Left colon (tissue), 2 donors: ENCODE measurements at regions of chr10 and their contacts with region 1.

Region 1: DNA sequence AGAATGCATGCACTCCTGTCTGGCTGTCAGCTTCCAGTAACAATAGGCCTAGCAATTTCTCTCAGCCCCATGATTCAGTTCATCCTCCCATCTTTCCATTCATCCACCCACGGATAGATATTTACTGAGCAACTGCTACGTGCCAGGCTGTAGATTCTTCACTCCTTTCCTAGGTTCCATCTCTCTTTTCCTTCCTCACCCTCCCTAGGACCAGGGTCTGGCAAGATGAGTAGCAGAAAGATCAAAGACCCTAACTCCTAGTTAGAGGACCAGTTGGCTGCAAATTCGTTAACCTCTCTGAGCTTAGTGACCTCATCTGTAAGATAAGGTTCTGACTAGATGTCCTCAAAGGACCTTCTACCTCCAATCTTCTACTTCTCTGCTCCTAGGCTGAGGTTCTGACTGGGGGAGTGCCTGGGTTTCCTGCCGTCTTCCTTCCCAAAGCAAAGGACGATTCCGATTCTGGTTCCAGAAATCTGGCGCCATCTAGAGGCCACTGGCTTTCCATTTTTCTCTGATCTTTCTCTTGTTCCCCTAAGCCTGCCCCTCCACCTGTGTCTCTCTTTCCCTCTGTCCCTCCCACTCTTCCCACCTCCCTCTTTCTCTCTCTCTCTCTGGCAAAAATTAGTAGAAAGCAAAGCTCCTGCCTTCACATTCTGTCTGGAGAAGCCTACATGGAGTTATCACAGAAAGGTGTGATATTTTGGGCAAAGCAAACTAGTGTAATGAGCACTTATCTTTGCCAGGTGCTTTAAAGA is 26.2 kb downstream of the TBATA start:
- DNase-seq: peak; percentile 46 to 76
- ATAC-seq: peak; percentile 65

Region 2: DNA sequence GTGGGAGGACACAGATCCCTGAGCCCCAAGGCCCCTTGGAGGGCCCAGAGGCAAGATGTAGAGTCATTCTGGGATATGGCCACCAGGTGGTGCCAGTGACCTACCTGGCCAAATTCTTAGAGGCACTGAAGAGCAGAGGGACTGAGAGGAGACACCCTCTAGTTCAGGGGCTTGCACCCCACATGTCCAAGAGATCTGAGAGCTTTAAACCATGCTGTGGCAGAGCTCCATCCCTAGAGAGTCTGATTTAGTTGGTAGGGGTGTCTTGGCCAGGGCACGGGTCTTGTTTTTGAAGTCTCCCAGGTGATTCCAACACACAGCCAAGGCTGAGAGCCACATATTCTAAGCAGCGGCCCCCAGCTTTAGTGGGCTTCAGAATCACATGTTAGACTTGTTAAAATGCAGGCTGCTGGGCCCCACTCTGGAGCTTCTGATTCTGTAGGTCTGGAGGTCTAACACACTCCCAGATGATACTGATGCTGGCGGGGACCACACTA is 208.9 kb before region 1 on chr10:
- intact Hi-C with region 1: loop called (anchors 5 kb)
- DNase-seq: peak in 1 of 2 donors; percentile 72
- ATAC-seq: peak; percentile 69

Region 3: GRCh38 chr10:70664702-70665195 is 94.2 kb before region 1 on chr10:
- intact Hi-C with region 1: no loop called
- DNase-seq: no peak
- ATAC-seq: no peak